ENCODE measurements at regions of chr20 and their contacts with region 1.

Region 1: DNA sequence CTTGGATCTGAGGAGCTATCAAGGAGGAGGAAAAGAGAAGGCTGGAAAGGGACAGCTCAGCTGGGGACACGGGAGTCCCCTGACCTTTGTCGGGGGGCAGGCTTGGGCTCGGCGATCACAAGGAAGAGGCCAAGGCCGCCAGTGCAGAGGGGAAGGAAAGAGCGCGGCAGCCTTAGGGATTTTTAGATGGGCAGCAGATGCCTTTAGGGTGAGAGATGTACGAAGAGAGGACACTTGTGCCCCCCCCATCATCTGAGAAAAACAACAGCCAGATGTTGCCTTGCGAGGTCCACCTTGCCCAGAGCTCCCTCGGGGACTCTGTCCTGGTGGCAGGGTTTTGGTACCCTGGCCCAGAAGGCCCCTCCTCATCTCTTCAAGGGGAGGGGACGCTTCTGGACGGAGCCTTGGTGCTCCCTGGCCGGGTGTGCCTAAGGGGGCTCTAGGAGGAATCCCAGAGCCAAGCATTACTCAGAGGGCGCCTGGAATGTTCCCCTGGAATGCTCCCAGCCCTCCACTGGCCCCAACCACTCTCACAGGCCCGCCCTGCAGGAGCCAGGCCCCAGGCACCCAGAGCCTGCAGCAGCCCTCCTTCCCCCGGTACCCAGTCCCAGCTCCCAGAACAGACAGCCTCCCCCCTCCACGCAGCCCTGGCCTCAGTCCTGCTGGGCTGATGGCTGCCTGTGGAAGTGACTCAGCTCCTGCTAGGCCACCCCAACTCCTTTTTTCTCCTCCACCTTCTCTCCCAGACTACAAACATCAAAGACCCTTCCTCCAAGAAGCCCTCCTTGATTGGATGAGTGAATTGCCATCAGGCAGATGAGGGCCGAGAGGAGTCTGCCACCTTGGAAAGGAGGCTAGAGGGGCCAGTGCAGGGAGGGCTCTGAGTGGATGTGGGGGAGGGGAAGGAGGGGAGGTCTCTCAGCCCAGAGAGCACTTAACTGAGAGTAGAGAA is 1.8 kb downstream of the ADAM33 start:
- DNase-seq: no peak
- ATAC-seq: no peak
- H3K4me3 Mint-ChIP-seq: no peak overlapping the region
- H3K27ac Mint-ChIP-seq: no peak overlapping the region
- H3K4me1 Mint-ChIP-seq: no peaks in the 10 kb centered on the region
- H3K27me3 Mint-ChIP-seq: peaks cover 43% of the 10 kb centered on the region
- CTCF ChIP-seq: no peak

Region 2: DNA sequence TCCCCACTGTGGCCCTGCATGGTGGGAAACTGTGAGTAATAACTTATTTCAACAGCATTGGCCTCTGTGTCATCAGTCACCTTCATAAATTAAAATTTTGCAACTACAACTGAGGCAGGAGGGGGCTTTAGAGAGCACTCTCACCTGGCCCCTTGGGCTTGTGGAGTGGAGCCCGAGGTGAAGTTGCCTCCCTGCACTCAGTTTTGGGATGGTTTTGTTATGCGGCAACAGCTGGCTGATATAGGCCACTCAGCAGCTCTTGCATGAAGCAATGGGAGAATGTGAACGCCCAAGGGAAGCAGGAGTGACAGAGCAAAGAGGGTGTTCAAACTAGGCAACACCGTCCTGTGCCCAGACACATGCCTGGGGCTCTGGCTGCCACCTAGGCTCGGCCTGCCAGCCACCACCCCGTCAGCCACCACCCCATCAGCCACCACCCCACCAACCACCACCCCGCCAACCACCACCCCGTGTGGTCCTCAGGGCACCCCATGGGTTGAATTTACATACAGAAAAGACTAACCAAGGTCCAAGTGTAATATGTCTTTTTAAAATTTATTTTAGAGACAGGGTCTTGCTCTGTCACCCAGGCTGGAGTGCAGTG is 12.5 kb before region 1 on chr20:
- CTCF ChIA-PET with region 1: interaction called, 31 read pairs
- POLR2A ChIA-PET with region 1: no interaction called
- intact Hi-C with region 1: no loop called
- DNase-seq: no peak
- ATAC-seq: no peak
- H3K4me3 Mint-ChIP-seq: no peak overlapping the region
- H3K27ac Mint-ChIP-seq: no peak overlapping the region
- H3K4me1 Mint-ChIP-seq: peaks cover 26% of the 10 kb centered on the region
- H3K27me3 Mint-ChIP-seq: peaks cover 30% of the 10 kb centered on the region
- CTCF ChIP-seq: no peak

Region 3: GRCh38 chr20:3696200-3696599 is 16.2 kb after region 1 on chr20:
- CTCF ChIA-PET with region 1: interaction called, 32 read pairs
- POLR2A ChIA-PET with region 1: interaction called, 4 read pairs
- intact Hi-C with region 1: no loop called
- DNase-seq: peak; percentile 25
- ATAC-seq: no peak
- H3K4me3 Mint-ChIP-seq: no peak overlapping the region
- H3K27ac Mint-ChIP-seq: no peak overlapping the region
- H3K4me1 Mint-ChIP-seq: no peaks in the 10 kb centered on the region
- H3K27me3 Mint-ChIP-seq: no peaks in the 10 kb centered on the region
- CTCF ChIP-seq: peak; percentile 64

Region 4: GRCh38 chr20:3716195-3716834 is 36.3 kb after region 1 on chr20:
- CTCF ChIA-PET with region 1: interaction called, 79 read pairs
- POLR2A ChIA-PET with region 1: no interaction called
- intact Hi-C with region 1: loop called (anchors 5 kb)
- DNase-seq: peak; percentile 46
- ATAC-seq: peak; percentile 89
- H3K4me3 Mint-ChIP-seq: no peak overlapping the region
- H3K27ac Mint-ChIP-seq: no peak overlapping the region
- H3K4me1 Mint-ChIP-seq: peaks cover 7% of the 10 kb centered on the region
- H3K27me3 Mint-ChIP-seq: peaks cover 8% of the 10 kb centered on the region
- CTCF ChIP-seq: peak; percentile 58

Measured in activated CD8-positive, alpha-beta T cell treated with anti-CD3 and anti-CD28 coated beads for 36 hours (primary cell).